OCI-LY7 (cell line): ENCODE measurements at regions of chr6 and their contacts with region 1.

Region 1: GRCh38 chr6:127332383-127332961 is 10.9 kb downstream of the ECHDC1 start:
- DNase-seq: no peak
- H3K4me3 ChIP-seq: no peak overlapping the region
- H3K27ac ChIP-seq: no peak overlapping the region
- H3K4me1 ChIP-seq: no peaks in the 10 kb centered on the region
- CTCF ChIP-seq: no peak

Region 2: DNA sequence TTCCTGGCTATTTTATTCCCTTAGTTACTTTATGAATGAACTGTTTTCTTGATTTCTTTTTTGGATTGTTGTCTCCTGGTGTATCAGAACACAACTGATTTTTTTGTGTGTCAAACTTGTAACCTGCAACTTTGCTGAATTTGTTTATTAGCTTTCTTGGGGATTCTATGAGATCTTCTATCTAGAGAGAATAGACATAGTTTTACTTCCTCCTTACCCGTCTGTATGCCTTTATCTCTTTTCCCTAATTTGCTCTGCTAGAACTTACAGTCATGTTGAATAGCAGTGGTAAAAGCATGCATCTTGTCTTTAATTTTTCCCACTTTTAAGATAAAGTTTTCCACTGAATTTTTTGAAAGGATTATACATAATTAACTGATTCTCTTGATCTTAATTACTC is 52.7 kb before region 1 on chr6:
- CTCF ChIA-PET with region 1: no interaction called
- POLR2A ChIA-PET with region 1: no interaction called
- intact Hi-C with region 1: no loop called
- DNase-seq: no peak
- H3K4me3 ChIP-seq: no peak overlapping the region
- H3K27ac ChIP-seq: no peak overlapping the region
- H3K4me1 ChIP-seq: no peaks in the 10 kb centered on the region
- CTCF ChIP-seq: no peak

Region 3: DNA sequence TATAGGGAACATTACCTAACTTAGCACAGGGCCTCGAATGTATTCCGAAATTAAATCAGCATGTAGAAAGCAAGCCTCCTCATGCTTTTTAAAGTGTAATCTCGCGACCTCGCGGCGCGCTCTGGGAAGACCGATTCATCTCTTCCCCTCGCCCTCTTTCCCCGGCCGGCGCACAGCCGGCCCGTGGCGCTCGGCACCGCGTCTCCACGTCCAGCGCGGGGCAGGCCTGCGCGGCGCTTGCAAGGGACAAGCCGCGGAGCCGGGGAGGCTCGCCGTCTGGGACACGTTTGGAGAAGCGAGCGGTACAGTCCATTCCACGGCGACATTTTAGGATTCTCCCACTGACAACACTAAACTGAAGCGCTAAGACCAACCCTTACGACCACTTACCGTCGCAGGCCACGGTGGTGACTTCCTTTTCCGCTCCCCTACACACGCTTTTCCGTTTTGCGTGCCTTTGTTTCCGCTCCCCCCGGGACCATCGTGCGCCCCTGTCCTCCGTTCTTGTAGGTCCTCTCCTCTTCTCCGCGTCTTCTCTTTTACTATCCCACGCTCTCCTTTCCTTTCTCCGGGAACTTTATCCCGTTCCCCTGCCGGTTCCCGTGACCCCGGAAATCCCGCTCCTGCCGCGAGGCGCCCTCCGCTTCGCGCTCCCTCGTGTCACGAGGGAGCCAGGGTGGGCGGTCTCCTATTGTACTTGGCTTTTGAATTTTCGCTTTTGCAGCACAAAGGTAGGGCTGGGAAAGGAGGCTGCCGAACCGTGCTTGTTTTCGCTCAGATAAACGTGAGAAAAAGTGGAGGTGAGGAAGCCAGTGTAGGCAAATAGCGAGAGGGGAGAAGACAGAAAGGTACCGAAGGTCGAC is 10.7 kb after region 1 on chr6 and contains the start of gene ECHDC1:
- CTCF ChIA-PET with region 1: interaction called, 5 read pairs
- POLR2A ChIA-PET with region 1: interaction called, 17 read pairs
- intact Hi-C with region 1: no loop called
- DNase-seq: peak; percentile 76
- H3K4me3 ChIP-seq: peak within 1 kb of the TSS; percentile 76
- H3K27ac ChIP-seq: peak within 1 kb of the TSS; percentile 17
- H3K4me1 ChIP-seq: peaks cover 20% of the 10 kb centered on the region
- CTCF ChIP-seq: no peak
- total RNA-seq, gene ECHDC1: 18.6 and 20.1 TPM in 2 replicates